Mammary epithelial cell (primary cell): ENCODE measurements at regions of chr6 and their contacts with region 1.

Region 1: GRCh38 chr6:20534295-20535262 is at the start of gene CDKAL1:
- DNase-seq: peak; percentile 88
- H3K4me3 ChIP-seq: peak within 1 kb of the TSS; percentile 57 to 94 (median 67)
- H3K27ac ChIP-seq: peak within 1 kb of the TSS; percentile 88
- H3K4me1 ChIP-seq: peaks cover 10% of the 10 kb centered on the region
- H3K27me3 ChIP-seq: no peaks in the 10 kb centered on the region
- CTCF ChIP-seq: no peak
- total RNA-seq, gene CDKAL1: 12.0 to 15.2 TPM

Region 2: DNA sequence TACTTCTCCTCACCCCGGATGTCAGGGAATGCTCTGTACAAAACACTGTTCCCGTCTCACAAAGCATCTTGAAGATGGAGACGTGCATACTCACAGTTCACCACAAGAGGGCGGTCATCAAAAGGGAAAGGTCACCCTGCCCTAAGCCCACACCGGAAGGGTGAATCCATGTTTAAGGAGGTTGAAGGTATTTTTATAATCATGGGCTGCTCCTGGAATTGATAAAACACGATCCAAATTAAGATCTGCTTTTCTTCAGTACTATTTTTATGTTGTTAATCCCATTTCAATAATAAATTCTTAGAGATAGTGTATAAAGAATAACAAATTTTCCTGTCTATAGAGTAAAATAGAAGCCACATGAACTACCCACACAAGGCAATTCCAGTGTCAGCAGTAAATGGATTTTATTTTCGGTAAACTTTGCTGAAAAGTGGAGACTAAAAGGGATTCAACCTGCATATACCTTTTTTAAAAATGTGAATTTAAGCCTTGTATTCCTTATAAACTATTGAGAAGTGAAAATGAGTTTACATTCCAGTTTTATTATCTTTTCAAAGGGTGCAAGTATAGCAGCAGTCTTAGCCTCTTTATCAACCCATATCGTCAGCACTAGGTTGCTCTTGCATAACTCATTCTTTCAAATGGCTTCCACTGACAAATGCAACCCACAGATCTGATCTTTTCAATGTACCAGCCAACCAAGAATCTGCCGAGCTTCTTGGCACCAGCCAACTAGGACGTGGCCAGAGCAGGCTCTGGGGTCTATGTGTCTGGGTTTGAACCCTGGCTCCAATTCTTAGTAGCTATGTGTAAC is 242.6 kb before region 1 on chr6:
- CTCF ChIA-PET with region 1: interaction called, 9 read pairs
- dilution Hi-C with region 1: no loop called
- in situ Hi-C with region 1: loop called (anchors 5 kb)
- intact Hi-C with region 1: no loop called
- DNase-seq: peak; percentile 67
- H3K4me3 ChIP-seq: no peak overlapping the region
- H3K27ac ChIP-seq: no peak overlapping the region
- H3K4me1 ChIP-seq: no peaks in the 10 kb centered on the region
- H3K27me3 ChIP-seq: no peaks in the 10 kb centered on the region
- CTCF ChIP-seq: peak; percentile 80 to 89